Activated T-helper 2 cell treated with anti-CD3 and anti-CD28 coated beads, Interferon-gamma antibody, Interleukin-2, Interleukin-4, amounts not matched to agents 10 μg/mL and 5 μg/mL and 100 μg/mL, durations not matched to agents 14 hours and 24 hours and 36 hours (primary cell): ENCODE measurements at regions of chr5 and their contacts with region 1.

Region 1: DNA sequence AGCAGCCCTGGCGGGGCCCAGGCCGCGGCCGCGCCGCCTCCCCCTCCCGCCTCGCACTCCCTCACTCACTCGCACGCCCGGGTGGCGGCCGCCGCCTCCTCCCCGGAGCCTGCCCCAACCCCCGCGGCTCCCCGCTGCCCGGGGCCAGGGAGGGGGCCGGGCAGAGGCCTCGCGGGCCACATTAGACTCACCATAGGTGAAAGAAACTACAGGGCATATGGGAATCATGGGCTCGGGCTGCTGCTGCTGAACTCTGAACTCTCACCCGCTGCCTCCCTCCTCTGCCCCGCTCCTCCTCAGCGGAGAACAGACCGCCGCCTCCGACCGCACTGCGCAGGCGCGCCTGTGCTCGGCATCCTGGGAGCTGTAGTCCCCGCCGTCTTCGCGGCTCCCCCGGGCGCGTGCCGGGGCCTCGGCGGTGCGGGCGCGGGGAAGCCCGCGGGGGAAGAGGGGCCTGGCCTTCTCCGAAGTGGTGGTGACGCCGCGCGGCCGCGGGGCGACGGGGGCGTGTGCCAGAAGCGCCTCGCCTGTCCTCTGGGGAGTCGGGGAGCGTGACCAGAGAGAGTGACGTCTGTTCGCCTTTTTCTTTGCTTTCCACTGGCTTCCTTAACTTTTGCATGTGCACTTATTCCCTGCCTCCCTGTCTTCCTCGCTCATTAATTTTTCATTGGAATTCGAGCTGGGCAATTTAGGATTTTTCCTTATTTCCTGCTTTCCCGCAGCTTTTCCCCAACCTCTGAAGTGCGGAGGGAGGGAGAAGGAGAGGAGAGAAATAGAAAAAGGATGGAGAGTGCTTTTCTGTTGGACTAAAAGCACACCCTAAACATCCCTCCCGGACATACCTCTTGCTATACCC is at the start of gene ZFR:
- DNase-seq: peak; percentile 91
- H3K4me3 Mint-ChIP-seq: peak within 1 kb of the TSS; percentile 93
- H3K27ac Mint-ChIP-seq: peak within 1 kb of the TSS; percentile 93
- H3K4me1 Mint-ChIP-seq: peaks cover 30% of the 10 kb centered on the region
- H3K27me3 Mint-ChIP-seq: peaks cover 17% of the 10 kb centered on the region
- total RNA-seq, gene ZFR: 68.6 and 69.2 TPM in 2 replicates

Region 2: DNA sequence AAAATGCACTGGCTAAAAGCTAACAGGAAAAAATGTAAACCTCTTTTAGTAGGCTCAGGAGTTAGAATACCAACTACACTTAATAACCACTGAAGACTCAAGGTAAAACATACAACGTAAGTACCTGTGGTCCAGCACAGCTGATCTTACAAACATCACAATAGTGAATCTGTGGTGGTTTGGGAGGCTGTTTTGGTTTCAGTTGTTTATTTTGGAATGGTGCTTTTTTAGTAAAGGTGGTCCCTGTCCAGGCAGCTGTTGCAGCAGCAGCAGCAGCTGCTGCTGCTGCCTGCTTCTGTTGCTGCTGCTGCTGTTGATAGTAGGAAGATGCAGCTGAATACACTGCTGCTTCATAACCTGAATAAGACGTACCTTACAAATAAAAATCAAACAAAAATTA is 38.0 kb before region 1 on chr5:
- intact Hi-C with region 1: no loop called
- DNase-seq: no peak
- H3K4me3 Mint-ChIP-seq: no peak overlapping the region
- H3K27ac Mint-ChIP-seq: no peak overlapping the region
- H3K4me1 Mint-ChIP-seq: peaks cover 3% of the 10 kb centered on the region
- H3K27me3 Mint-ChIP-seq: no peaks in the 10 kb centered on the region

Region 3: DNA sequence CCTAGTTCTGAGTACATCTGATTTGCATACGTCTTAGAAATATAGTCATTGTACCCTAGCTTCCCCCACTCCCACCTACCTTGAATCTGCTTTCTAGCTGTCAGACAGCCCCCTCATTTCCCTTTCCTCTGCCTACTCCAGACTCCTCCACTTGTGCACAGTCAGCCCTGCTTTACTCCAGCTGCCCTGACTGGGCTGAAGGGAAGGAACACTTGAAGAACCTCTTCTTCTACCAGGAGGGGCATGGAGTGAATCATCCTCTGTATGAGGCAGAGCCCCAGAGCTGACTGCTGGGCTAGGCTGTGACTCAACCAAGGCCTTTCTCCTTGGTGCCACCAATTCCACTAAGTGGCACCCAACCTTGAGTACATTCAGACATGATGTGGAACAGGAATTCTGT is 18.0 kb after region 1 on chr5:
- intact Hi-C with region 1: loop called (anchors 1 kb)
- DNase-seq: no peak
- H3K4me3 Mint-ChIP-seq: no peak overlapping the region
- H3K27ac Mint-ChIP-seq: peak overlapping the region; percentile 92
- H3K4me1 Mint-ChIP-seq: peaks cover 18% of the 10 kb centered on the region
- H3K27me3 Mint-ChIP-seq: no peaks in the 10 kb centered on the region

Region 4: DNA sequence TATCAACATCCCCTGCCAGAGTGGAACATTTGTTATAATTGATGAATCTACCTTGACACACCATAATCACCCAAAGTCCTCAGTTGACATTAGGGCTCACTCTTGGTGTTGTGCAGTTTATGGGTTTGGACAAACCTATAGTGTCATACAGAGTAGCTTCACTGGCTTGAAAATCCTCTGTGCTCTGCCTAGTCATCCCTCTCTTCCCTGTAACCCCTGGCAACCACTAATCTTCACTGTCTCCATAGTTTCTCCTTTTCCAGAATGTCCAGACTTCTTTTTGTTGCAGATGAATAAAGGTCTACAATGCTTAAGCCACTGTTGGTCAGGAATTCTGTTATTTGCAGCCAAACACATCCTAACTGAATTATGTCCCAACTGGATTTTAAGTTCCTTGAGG is 118.2 kb after region 1 on chr5:
- intact Hi-C with region 1: no loop called
- DNase-seq: no peak
- H3K4me3 Mint-ChIP-seq: no peak overlapping the region
- H3K27ac Mint-ChIP-seq: no peak overlapping the region
- H3K4me1 Mint-ChIP-seq: no peaks in the 10 kb centered on the region
- H3K27me3 Mint-ChIP-seq: no peaks in the 10 kb centered on the region

Region 5: DNA sequence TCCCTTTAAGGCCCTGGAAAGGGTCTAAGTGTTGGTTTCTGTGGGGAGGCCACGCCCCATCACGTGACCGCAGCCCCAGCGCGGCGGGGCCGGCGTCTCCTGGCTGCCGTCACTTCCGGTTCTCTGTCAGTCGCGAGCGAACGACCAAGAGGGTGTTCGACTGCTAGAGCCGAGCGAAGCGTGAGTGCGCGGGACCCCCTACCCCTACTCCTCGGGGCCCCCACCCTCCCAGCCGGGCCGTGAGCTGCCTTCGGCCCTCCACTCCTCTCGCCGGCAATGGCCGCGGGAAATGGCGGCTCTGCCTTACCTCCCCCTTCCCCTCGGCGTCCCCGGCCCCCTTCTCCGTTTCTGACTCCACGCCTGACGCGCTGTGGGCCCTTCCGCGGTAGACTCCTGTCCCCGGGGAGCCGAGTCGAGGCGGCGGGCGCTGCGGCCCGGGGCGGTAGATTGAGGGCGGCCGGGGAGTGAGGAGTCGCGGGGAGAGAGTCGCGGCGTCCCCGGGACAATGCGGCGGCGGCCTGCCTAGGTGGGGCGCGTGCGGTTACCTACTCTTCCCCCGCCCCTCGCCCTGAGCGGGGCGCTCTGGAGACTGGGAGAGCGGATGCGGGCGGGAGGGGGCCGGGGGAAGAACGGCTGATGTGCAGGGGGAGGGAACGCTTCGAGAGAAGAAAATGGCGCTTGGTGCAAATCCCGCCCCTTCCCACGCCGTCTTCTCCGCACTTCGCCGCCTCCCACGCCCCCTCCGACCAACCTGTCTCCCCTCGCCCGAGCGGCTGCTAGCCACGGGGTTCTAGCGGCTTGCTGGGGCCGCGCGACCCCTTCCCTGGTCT is 141.0 kb after region 1 on chr5 and contains the start of gene SUB1:
- intact Hi-C with region 1: loop called (anchors 1 kb)
- DNase-seq: peak; percentile 90
- H3K4me3 Mint-ChIP-seq: peak within 1 kb of the TSS; percentile 96
- H3K27ac Mint-ChIP-seq: peak within 1 kb of the TSS; percentile 99
- H3K4me1 Mint-ChIP-seq: peaks cover 55% of the 10 kb centered on the region
- H3K27me3 Mint-ChIP-seq: no peaks in the 10 kb centered on the region
- total RNA-seq, gene SUB1: 380 and 404 TPM in 2 replicates